Transverse colon (tissue), 4 donors: ENCODE measurements at regions of chr2 and their contacts with region 1.

Region 1: DNA sequence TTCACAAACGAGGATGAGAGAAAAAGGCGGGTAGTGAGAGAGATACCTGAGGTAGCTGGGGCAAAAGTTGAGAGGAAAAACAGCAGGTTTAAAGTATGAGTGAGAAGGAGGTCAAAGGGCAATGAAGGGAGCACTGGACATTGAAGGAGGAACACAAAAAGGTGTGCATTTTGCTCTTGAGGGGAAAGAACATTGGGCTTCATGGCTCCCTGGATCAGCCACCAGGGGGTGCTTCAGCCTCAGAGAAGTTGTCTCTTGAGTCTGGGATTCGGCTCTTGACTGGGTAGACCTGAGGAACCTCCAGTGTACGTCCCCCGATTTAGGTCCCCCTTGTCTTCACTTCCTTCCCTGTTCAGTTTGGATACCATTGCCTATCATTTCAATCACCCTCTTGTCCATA is 128.5 kb downstream of the RAPGEF4 start:
- DNase-seq: peak; percentile 54
- H3K4me3 ChIP-seq: no peak overlapping the region
- H3K27ac ChIP-seq: no peak overlapping the region
- H3K4me1 ChIP-seq: peaks cover 0 to 5% (median 0%) of the 10 kb centered on the region in 4 donors
- H3K27me3 ChIP-seq: peaks cover 43% of the 10 kb centered on the region
- CTCF ChIP-seq: peak; percentile 62 to 72 (median 63)
- EP300 ChIP-seq: no peak
- POLR2A ChIP-seq: no peak

Region 2: DNA sequence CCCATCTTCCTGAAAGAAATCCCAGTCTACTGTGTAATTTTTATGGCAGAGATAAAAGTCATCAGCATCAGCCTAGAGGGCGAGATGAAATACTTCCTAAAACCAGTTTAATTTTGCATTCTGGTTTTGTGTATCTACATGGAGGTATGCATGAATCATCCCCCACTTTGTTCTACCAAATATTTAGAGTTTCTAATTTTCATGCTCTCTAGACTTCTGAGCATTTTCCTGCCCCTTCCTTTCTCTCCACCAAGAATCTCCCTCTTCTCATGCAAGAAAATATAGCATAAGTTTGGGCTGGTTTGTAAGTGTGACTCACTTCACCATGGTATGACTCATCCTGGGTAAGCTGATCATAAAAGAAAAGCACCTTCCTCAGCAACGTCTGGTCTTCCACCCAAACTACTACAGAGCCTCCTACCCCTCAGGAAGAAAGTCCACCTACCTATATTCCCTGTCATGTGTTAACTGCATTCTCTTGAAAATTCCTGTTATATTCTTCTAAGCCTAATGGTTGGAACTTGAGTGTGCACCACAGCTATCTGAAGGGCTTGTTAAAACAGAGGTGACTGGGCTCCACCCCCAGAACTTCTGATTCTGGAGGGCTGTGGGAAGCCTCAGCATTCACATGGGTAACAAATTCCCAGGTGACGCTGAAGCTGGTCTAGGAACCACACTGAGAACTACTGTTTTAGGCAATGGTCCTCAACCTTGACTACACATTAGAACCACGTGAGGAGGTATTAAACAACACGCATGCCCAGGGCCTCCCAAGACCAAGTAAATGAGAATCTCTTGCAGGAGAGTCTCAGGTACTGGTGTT is 165.9 kb before region 1 on chr2:
- in situ Hi-C with region 1: no loop called
- intact Hi-C with region 1: no loop called
- DNase-seq: no peak
- H3K4me3 ChIP-seq: no peak overlapping the region
- H3K27ac ChIP-seq: no peak overlapping the region
- H3K4me1 ChIP-seq: peaks cover 2 to 7% (median 6%) of the 10 kb centered on the region in 4 donors
- H3K27me3 ChIP-seq: no peaks in the 10 kb centered on the region
- CTCF ChIP-seq: no peak
- EP300 ChIP-seq: no peak
- POLR2A ChIP-seq: no peak

Region 3: DNA sequence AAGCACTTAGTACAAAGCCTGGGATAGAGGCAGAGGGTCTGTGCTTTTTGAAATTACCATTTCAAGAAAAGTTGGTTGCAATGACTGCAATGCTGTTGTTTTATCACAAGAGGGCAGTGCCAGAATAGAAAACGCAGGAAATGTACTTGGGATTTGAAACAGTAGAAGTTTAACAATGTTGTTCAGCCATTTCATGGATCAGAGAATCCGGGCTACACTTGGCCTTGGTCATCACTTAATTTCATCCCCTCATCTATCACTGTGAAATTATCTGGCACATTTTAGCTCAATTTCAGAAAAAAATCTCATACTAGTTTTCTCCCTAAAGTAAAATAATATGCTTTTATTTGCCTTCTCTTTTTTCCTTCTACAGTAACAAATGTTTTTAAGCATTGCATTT is 57.7 kb before region 1 on chr2:
- in situ Hi-C with region 1: no loop called
- intact Hi-C with region 1: loop called (anchors 10 kb)
- DNase-seq: no peak
- H3K4me3 ChIP-seq: no peak overlapping the region
- H3K27ac ChIP-seq: no peak overlapping the region
- H3K4me1 ChIP-seq: peaks cover 0 to 7% (median 6%) of the 10 kb centered on the region in 4 donors
- H3K27me3 ChIP-seq: peaks cover 11% of the 10 kb centered on the region
- CTCF ChIP-seq: peak; percentile 62 to 79 (median 73)
- EP300 ChIP-seq: no peak
- POLR2A ChIP-seq: no peak